ENCODE measurements at regions of chr9 and their contacts with region 1.

Region 1: GRCh38 chr9:80503671-80504281 is 932.0 kb downstream of the TLE4 start:
- DNase-seq: no peak
- ATAC-seq: no peak
- H3K4me3 ChIP-seq: no peak overlapping the region
- H3K4me3 Mint-ChIP-seq: no peak overlapping the region
- H3K27ac ChIP-seq: no peak overlapping the region
- H3K27ac Mint-ChIP-seq: no peak overlapping the region
- H3K4me1 ChIP-seq: no peaks in the 10 kb centered on the region
- H3K4me1 Mint-ChIP-seq: no peaks in the 10 kb centered on the region
- H3K27me3 ChIP-seq: no peaks in the 10 kb centered on the region
- H3K27me3 Mint-ChIP-seq: no peaks in the 10 kb centered on the region

Region 2: GRCh38 chr9:79165019-79165780 is 1338.6 kb before region 1 on chr9:
- CTCF ChIA-PET with region 1: no interaction called
- POLR2A ChIA-PET with region 1: no interaction called
- intact Hi-C with region 1: no loop called
- DNase-seq: no peak
- ATAC-seq: no peak
- H3K4me3 ChIP-seq: no peak overlapping the region
- H3K4me3 Mint-ChIP-seq: no peak overlapping the region
- H3K27ac ChIP-seq: no peak overlapping the region
- H3K27ac Mint-ChIP-seq: no peak overlapping the region
- H3K4me1 ChIP-seq: no peaks in the 10 kb centered on the region
- H3K4me1 Mint-ChIP-seq: no peaks in the 10 kb centered on the region
- H3K27me3 ChIP-seq: no peaks in the 10 kb centered on the region
- H3K27me3 Mint-ChIP-seq: peaks cover 0 to 8% (median 5%) of the 10 kb centered on the region in 5 donors

Region 3: DNA sequence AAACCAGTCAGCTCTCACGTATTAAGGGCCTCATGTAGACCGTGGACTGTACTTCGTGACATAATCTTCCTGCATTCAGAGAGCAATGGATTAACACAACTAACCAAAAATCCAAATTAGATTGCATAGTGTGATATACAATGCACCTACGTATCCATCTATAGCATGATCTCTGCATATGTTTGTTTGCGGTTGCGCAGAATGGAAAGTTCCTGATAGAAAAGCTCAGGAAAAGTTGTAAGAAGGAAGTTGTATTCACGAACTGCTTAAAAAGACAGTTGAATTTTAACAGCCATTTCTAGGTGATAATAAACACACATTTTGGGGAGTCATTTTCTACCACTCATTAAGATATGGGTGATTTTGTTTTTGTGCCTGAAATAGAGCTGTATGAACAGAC is 63.1 kb before region 1 on chr9:
- CTCF ChIA-PET with region 1: no interaction called
- POLR2A ChIA-PET with region 1: no interaction called
- intact Hi-C with region 1: loop called in 1 of 2 experiments (anchors 10 kb)
- DNase-seq: no peak
- ATAC-seq: no peak
- H3K4me3 ChIP-seq: no peak overlapping the region
- H3K4me3 Mint-ChIP-seq: no peak overlapping the region
- H3K27ac ChIP-seq: no peak overlapping the region
- H3K27ac Mint-ChIP-seq: no peak overlapping the region
- H3K4me1 ChIP-seq: no peaks in the 10 kb centered on the region
- H3K4me1 Mint-ChIP-seq: no peaks in the 10 kb centered on the region
- H3K27me3 ChIP-seq: no peaks in the 10 kb centered on the region
- H3K27me3 Mint-ChIP-seq: no peaks in the 10 kb centered on the region

Region 4: GRCh38 chr9:80552931-80553330 is 49.2 kb after region 1 on chr9:
- CTCF ChIA-PET with region 1: no interaction called
- POLR2A ChIA-PET with region 1: no interaction called
- intact Hi-C with region 1: no loop called
- DNase-seq: no peak
- ATAC-seq: no peak
- H3K4me3 ChIP-seq: no peak overlapping the region
- H3K4me3 Mint-ChIP-seq: no peak overlapping the region
- H3K27ac ChIP-seq: no peak overlapping the region
- H3K27ac Mint-ChIP-seq: no peak overlapping the region
- H3K4me1 ChIP-seq: no peaks in the 10 kb centered on the region
- H3K4me1 Mint-ChIP-seq: no peaks in the 10 kb centered on the region
- H3K27me3 ChIP-seq: no peaks in the 10 kb centered on the region
- H3K27me3 Mint-ChIP-seq: no peaks in the 10 kb centered on the region

Region 5: GRCh38 chr9:82134010-82134409 is 1630.2 kb after region 1 on chr9:
- CTCF ChIA-PET with region 1: no interaction called
- POLR2A ChIA-PET with region 1: no interaction called
- intact Hi-C with region 1: no loop called
- DNase-seq: no peak
- ATAC-seq: no peak
- H3K4me3 ChIP-seq: no peak overlapping the region
- H3K4me3 Mint-ChIP-seq: no peak overlapping the region
- H3K27ac ChIP-seq: no peak overlapping the region
- H3K27ac Mint-ChIP-seq: no peak overlapping the region
- H3K4me1 ChIP-seq: no peaks in the 10 kb centered on the region
- H3K4me1 Mint-ChIP-seq: no peaks in the 10 kb centered on the region
- H3K27me3 ChIP-seq: no peaks in the 10 kb centered on the region
- H3K27me3 Mint-ChIP-seq: no peaks in the 10 kb centered on the region

Measured in naive thymus-derived CD4-positive, alpha-beta T cell (primary cell).